Activated T-helper 2 cell treated with anti-CD3 and anti-CD28 coated beads, Interferon-gamma antibody, Interleukin-2, Interleukin-4, amounts not matched to agents 10 μg/mL and 5 μg/mL and 100 μg/mL, durations not matched to agents 14 hours and 24 hours and 36 hours (primary cell): ENCODE measurements at regions of chr6 and their contacts with region 1.

Region 1: GRCh38 chr6:132725947-132726607 is 12.2 kb upstream of the VNN1 start:
- DNase-seq: no peak
- H3K4me3 Mint-ChIP-seq: no peak overlapping the region
- H3K27ac Mint-ChIP-seq: no peak overlapping the region
- H3K4me1 Mint-ChIP-seq: peaks cover 18% of the 10 kb centered on the region
- H3K27me3 Mint-ChIP-seq: no peaks in the 10 kb centered on the region

Region 2: GRCh38 chr6:132768051-132768517 is 42.0 kb after region 1 on chr6:
- intact Hi-C with region 1: loop called (anchors 5 kb)
- DNase-seq: peak; percentile 21
- H3K4me3 Mint-ChIP-seq: no peak overlapping the region
- H3K27ac Mint-ChIP-seq: no peak overlapping the region
- H3K4me1 Mint-ChIP-seq: peaks cover 17% of the 10 kb centered on the region
- H3K27me3 Mint-ChIP-seq: peaks cover 2% of the 10 kb centered on the region

Region 3: DNA sequence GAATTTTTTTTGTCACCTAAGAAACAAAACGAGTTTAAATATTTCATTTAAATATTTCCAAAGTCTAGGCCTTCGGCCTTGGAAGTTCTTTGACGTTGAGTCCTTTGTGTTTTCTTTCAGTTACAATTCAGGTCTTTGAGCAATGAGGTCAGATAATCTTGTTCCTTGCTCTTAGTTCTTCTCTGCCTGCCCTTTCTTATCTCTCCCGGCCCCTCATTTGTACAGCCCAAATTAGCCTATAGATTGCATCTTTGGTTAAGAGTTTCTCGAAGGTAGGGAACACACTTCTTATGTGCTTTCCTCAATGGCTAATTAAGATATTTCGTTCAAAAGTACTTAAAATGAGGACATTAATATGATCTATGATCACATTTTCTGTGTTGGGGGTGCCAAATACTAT is 106.8 kb after region 1 on chr6:
- intact Hi-C with region 1: no loop called
- DNase-seq: no peak
- H3K4me3 Mint-ChIP-seq: no peak overlapping the region
- H3K27ac Mint-ChIP-seq: no peak overlapping the region
- H3K4me1 Mint-ChIP-seq: no peaks in the 10 kb centered on the region
- H3K27me3 Mint-ChIP-seq: peaks cover 14% of the 10 kb centered on the region